Activated CD4-positive, alpha-beta memory T cell treated with anti-CD3 and anti-CD28 coated beads, Interleukin-2, amount 10 ng/mL, durations not matched to agents 7 days and 5 days (primary cell): ENCODE measurements at regions of chr12 and their contacts with region 1.

Region 1: DNA sequence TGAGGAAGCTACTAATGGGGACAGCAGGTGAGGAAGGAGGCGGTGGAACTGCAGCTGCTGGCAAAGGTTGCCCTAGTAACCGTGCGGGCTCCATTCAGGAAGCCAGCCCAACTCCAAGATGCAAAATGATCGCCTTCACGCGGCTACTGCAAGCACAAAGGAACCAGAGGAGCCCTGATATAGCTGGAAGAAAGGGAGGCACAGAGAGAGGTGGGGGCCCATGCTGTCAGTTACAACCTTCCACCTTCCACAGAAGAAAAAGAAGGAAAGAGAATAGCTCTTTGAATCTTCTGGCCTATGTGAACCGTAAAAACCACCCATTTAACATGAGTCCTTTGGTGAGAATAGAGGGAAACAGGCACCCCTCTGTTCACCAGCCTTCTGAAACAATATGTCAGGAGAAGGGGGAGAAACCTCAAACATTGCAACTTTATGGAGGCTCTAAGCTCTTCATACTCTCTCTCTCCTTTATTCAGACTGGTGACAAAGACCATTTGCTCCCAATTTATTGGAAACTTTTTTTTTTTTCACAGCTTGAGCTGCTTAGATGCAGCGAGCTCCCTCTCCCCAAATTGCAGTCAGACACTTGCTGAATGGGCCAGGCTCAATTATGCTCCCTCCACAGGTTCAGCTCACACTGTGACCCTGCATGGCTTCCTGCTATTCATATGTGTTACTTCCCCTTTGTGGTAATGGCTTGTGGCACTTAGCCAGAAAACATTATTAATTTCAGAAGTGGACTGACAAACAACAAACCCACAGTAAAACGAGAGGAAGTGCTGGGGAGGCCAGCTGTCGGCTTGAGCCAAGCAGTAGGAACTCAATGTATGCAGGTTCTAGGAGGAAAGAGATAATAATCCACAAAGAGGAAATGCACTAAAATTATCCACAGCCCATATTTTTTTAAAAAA is 6.2 kb downstream of the DUSP6 start:
- DNase-seq: peak; percentile 75
- H3K4me3 Mint-ChIP-seq: peak overlapping the region; percentile 98
- H3K27ac Mint-ChIP-seq: peak overlapping the region; percentile 91
- H3K4me1 Mint-ChIP-seq: peaks cover 62% of the 10 kb centered on the region
- H3K27me3 Mint-ChIP-seq: no peaks in the 10 kb centered on the region

Region 2: GRCh38 chr12:89040146-89040964 is 305.7 kb before region 1 on chr12:
- CTCF ChIA-PET with region 1: interaction called, 18 read pairs
- POLR2A ChIA-PET with region 1: interaction called, 83 read pairs
- DNase-seq: peak; percentile 90
- H3K4me3 Mint-ChIP-seq: peak overlapping the region; percentile 35
- H3K27ac Mint-ChIP-seq: peak overlapping the region; percentile 96
- H3K4me1 Mint-ChIP-seq: peaks cover 58% of the 10 kb centered on the region
- H3K27me3 Mint-ChIP-seq: no peaks in the 10 kb centered on the region

Region 3: DNA sequence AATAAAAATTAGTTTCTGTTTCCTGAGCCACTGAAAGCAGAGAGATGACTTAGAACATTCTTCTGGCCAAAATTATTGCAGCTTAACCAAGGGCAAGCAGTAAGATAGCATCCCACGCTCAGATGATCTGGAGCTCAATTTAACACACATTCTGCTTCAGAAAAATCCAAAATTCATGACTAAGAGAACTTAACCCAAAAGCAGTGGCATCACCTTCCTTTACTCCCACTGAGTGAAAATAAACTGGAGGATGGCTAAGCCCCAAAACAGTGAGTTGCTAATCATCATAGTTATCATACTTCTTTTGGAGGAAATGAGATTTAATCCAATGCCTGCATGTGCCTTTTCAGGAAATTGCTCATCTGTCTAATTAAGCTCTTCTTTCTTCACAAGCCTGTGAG is 189.2 kb before region 1 on chr12:
- CTCF ChIA-PET with region 1: interaction called, 3 read pairs
- POLR2A ChIA-PET with region 1: interaction called, 38 read pairs
- DNase-seq: no peak
- H3K4me3 Mint-ChIP-seq: no peak overlapping the region
- H3K27ac Mint-ChIP-seq: peak overlapping the region; percentile 77
- H3K4me1 Mint-ChIP-seq: peaks cover 28% of the 10 kb centered on the region
- H3K27me3 Mint-ChIP-seq: no peaks in the 10 kb centered on the region

Region 4: DNA sequence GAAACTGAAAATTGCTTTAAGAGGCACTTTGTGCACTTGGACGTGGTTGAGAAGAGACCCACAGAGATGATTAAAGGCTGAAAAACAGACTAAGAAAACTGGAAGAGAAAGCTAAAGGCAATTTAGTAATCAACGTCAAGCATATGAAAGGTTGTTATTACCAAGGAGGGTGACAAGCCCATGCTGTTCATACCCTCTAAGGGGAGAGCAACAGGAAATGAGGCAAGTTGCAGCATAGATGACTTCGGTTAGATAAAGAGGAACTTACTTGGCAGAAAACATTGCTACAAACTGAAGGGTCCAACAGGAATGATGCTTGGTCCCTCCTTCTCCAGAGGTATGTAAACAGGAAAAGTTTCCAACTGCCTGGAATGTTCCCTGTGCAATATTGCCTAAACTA is 101.5 kb before region 1 on chr12:
- CTCF ChIA-PET with region 1: interaction called, 25 read pairs
- POLR2A ChIA-PET with region 1: interaction called, 293 read pairs
- DNase-seq: peak; percentile 48
- H3K4me3 Mint-ChIP-seq: peak overlapping the region; percentile 55
- H3K27ac Mint-ChIP-seq: peak overlapping the region; percentile 96
- H3K4me1 Mint-ChIP-seq: peaks cover 56% of the 10 kb centered on the region
- H3K27me3 Mint-ChIP-seq: no peaks in the 10 kb centered on the region

Region 5: GRCh38 chr12:89461649-89462612 is 115.8 kb after region 1 on chr12:
- CTCF ChIA-PET with region 1: interaction called, 57 read pairs
- POLR2A ChIA-PET with region 1: interaction called, 98 read pairs
- DNase-seq: no peak
- H3K4me3 Mint-ChIP-seq: peak overlapping the region; percentile 65
- H3K27ac Mint-ChIP-seq: peak overlapping the region; percentile 59
- H3K4me1 Mint-ChIP-seq: peaks cover 62% of the 10 kb centered on the region
- H3K27me3 Mint-ChIP-seq: no peaks in the 10 kb centered on the region

Region 6: GRCh38 chr12:89524541-89525285 is 178.6 kb after region 1 on chr12 and contains the start of gene GALNT4:
- CTCF ChIA-PET with region 1: interaction called, 6 read pairs
- POLR2A ChIA-PET with region 1: interaction called, 64 read pairs
- DNase-seq: peak; percentile 84
- H3K4me3 Mint-ChIP-seq: peak within 1 kb of the TSS; percentile 90
- H3K27ac Mint-ChIP-seq: peak within 1 kb of the TSS; percentile 94
- H3K4me1 Mint-ChIP-seq: peaks cover 69% of the 10 kb centered on the region
- H3K27me3 Mint-ChIP-seq: no peaks in the 10 kb centered on the region
- total RNA-seq, gene GALNT4: 21.5 to 23.3 TPM

Region 7: DNA sequence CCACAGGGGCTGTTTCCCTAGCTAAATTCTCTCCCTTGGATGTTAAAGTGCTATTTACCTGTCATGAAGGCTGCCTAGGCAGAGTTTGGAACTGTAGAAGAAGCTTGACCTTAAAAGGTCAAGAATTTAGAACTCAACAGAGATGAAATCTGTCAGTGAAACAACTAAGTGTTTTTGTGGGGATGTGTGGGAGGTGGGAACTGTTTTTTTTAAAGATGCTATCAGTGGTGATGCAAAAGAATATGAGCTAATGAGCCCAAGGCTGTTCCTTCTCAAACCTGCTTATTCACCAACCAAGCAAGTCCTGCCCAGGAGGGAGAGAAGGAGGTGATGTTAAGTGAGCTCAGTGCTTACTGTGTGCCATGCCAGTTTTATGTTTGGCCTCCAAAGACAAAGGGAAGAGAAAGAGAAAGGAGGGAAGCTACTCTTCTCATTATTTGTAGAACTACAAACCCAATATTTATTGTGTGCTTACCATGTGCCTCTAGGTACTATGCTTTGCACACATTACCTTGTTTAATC is 220.6 kb after region 1 on chr12:
- CTCF ChIA-PET with region 1: no interaction called
- POLR2A ChIA-PET with region 1: no interaction called
- DNase-seq: no peak
- H3K4me3 Mint-ChIP-seq: no peak overlapping the region
- H3K27ac Mint-ChIP-seq: no peak overlapping the region
- H3K4me1 Mint-ChIP-seq: peaks cover 7% of the 10 kb centered on the region
- H3K27me3 Mint-ChIP-seq: no peaks in the 10 kb centered on the region